ENCODE measurements at regions of chr6 and their contacts with region 1.

Region 1: GRCh38 chr6:96626759-96627364 is 63.9 kb downstream of the FHL5 start:
- DNase-seq: no peak
- ATAC-seq: no peak

Region 2: GRCh38 chr6:97059473-97059872 is 432.6 kb after region 1 on chr6:
- intact Hi-C with region 1: loop called (anchors 2 kb)
- DNase-seq: no peak
- ATAC-seq: no peak

Measured in Right ventricle myocardium inferior (tissue), 1 donor.